Heart left ventricle (tissue), 16 donors: ENCODE measurements at regions of chr3 and their contacts with region 1.

Region 1: DNA sequence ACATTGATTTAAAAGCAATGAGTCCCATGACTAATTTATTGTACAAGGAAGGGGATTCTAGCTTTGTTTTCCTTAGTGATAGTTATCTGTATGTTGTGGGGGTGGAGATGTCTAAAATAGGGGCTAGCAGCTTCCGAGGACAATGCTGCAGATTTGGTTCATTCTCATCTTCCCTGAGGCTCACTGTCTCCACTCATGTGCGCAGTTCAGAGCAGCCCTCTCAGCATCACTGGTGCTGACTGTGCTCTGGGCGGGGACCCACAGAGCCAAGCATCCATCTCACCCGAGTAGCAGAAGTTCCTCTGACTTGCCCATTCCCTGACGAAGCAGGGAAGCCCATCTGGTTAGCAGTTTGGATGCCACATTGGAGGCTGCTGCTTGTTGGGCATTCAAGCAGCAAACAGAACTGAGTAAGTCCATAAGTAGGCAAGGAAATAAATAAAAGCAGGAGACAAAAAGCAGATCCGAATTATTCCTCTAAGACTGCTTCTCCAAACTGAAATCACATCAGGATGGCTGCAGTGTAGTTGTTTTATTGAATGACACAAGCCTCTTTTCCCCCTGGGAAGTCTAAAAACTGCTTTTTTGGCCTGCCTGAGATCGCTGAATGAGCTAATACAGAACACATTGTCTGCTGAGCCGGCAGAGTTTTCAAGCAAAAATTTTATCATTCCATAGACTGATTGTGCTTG is 27.5 kb downstream of the RARB start:
- DNase-seq: peak in 4 of 5 donors; percentile 42 to 69 (median 56)
- ATAC-seq: peak; percentile 65 to 81 (median 74)
- H3K4me3 ChIP-seq: peak overlapping the region in 4 of 12 donors; percentile 19 to 34 (median 24)
- H3K27ac ChIP-seq: peak overlapping the region; percentile 43 to 81 (median 71)
- H3K4me1 ChIP-seq: peaks cover 3 to 90% (median 51%) of the 10 kb centered on the region in 12 donors
- H3K27me3 ChIP-seq: no peaks in the 10 kb centered on the region
- CTCF ChIP-seq: no peak
- POLR2A ChIP-seq: no peak

Region 2: DNA sequence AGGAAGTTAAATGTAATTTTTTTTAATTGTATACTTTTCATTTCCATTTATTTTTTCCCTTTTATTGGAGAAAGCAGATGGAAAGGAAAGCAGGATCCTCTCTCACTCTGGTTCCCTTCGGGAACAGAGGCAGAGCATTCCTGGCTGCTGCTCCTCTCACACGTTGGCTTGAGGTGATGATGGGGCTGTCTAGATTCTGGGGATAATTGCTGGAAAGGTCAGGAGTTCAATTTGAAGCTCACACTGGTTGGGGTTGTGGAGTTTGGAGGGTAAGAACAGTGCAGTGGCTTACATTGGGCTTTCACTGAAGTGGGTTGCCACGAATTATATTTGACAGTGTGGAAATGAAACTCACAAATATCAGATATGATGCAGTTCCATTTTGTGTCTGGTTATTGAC is 30.1 kb after region 1 on chr3:
- intact Hi-C with region 1: loop called in 1 of 10 experiments (anchors 2 kb)
- DNase-seq: no peak
- ATAC-seq: peak in 3 of 4 donors; percentile 21 to 40 (median 35)
- H3K4me3 ChIP-seq: no peak overlapping the region
- H3K27ac ChIP-seq: peak overlapping the region in 5 of 12 donors; percentile 8 to 49 (median 29)
- H3K4me1 ChIP-seq: peaks cover 0 to 71% (median 30%) of the 10 kb centered on the region in 12 donors
- H3K27me3 ChIP-seq: no peaks in the 10 kb centered on the region
- CTCF ChIP-seq: no peak
- POLR2A ChIP-seq: no peak